CD8-positive, alpha-beta T cell (primary cell): ENCODE measurements at regions of chr21 and their contacts with region 1.

Region 1: DNA sequence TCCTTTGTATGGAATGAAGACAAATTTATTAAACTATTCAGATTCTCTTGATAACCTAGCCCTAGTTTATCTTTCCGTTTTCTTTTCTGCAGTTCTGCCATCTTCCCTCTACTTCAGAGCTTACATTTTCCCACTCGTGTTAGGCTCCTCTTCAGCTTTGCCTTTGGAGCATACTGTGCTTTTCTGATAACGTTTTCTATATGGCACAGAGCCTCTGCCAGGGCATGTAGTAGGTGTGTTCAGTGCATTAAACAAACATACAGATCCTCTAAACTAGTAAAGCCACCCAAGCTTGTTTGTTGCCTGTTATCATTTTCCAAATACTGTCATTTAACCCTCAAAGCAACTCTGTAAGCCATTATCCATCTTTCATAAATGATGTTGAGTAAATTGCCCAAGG is 25.1 kb downstream of the DYRK1A start:
- DNase-seq: no peak
- ATAC-seq: no peak
- H3K4me3 ChIP-seq: no peak overlapping the region
- H3K4me3 Mint-ChIP-seq: peak overlapping the region; percentile 12
- H3K27ac ChIP-seq: no peak overlapping the region
- H3K27ac Mint-ChIP-seq: peak overlapping the region; percentile 0
- H3K4me1 ChIP-seq: peaks cover 81% of the 10 kb centered on the region
- H3K4me1 Mint-ChIP-seq: peaks cover 94% of the 10 kb centered on the region
- H3K27me3 ChIP-seq: no peaks in the 10 kb centered on the region
- H3K27me3 Mint-ChIP-seq: no peaks in the 10 kb centered on the region
- CTCF ChIP-seq: no peak

Region 2: DNA sequence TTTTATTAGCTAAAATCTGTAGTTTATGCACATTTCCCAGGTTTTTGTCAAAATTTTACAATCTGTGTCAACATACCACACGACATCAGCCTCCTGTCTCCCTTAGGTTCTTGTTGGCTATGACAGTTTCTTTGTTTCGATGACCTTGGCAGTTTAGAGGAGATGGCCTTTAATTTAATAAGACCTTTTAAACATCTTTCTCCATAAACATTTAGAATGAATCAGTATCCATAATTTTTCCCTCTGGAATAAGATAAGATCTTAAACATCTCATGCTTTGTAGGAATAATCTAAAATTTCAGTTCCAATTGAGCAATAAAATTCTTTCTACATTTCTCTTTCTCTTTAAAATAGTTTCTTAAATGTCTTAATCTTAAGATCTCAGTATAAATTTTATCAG is 53.8 kb before region 1 on chr21:
- CTCF ChIA-PET with region 1: no interaction called
- POLR2A ChIA-PET with region 1: no interaction called
- intact Hi-C with region 1: loop called in 1 of 2 experiments (anchors 2 kb)
- DNase-seq: no peak
- ATAC-seq: no peak
- H3K4me3 ChIP-seq: no peak overlapping the region
- H3K4me3 Mint-ChIP-seq: no peak overlapping the region
- H3K27ac ChIP-seq: no peak overlapping the region
- H3K27ac Mint-ChIP-seq: no peak overlapping the region
- H3K4me1 ChIP-seq: no peaks in the 10 kb centered on the region
- H3K4me1 Mint-ChIP-seq: no peaks in the 10 kb centered on the region
- H3K27me3 ChIP-seq: no peaks in the 10 kb centered on the region
- H3K27me3 Mint-ChIP-seq: peaks cover 2% of the 10 kb centered on the region
- CTCF ChIP-seq: no peak

Region 3: DNA sequence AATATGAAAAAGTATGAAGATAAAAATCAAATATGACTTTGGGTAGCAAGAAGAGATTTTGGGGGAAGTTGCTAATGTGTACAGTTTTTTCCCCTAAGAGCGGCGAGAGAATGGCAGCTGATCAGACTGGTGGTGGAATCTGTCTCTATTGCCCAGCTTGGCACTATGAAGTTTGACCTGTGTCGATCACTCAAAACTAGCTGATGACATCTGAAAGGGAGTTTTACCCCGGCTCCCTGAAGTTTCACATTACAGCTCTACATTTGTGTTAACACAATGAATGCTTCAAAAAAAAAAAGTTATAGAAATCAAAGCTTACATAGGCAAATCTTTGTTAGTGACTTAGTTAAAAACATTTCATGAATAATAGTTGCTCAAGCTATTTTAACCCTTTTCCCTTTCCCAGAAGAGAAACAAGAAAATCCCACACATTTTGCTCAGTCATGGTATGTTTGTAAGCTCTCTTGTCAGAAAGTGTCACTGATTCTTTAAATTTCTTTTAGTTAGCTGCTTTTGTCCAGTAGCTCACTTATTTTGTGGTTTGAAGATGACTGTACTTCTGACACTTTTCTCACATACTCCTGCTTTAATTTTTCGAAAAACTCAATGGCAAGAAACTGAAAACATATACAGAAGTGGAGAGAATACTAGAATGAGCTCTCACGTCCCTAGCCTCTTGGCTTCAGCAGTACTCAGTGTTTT is 16.2 kb after region 1 on chr21:
- CTCF ChIA-PET with region 1: interaction called, 3 read pairs
- POLR2A ChIA-PET with region 1: interaction called, 4 read pairs
- intact Hi-C with region 1: loop called in 1 of 2 experiments (anchors 2 kb)
- DNase-seq: peak in 1 of 9 experiments; percentile 26
- ATAC-seq: no peak
- H3K4me3 ChIP-seq: no peak overlapping the region
- H3K4me3 Mint-ChIP-seq: peak overlapping the region; percentile 23
- H3K27ac ChIP-seq: peak overlapping the region in 1 of 2 experiments; percentile 3
- H3K27ac Mint-ChIP-seq: peak overlapping the region; percentile 57
- H3K4me1 ChIP-seq: peaks cover 82% of the 10 kb centered on the region
- H3K4me1 Mint-ChIP-seq: peaks cover 84% of the 10 kb centered on the region
- H3K27me3 ChIP-seq: no peaks in the 10 kb centered on the region
- H3K27me3 Mint-ChIP-seq: no peaks in the 10 kb centered on the region
- CTCF ChIP-seq: no peak